Transverse colon (tissue), 4 donors: ENCODE measurements at regions of chr6 and their contacts with region 1.

Region 1: GRCh38 chr6:119978274-119978889 is 628.8 kb upstream of the MAN1A1 start:
- DNase-seq: no peak
- H3K4me3 ChIP-seq: no peak overlapping the region
- H3K27ac ChIP-seq: no peak overlapping the region
- H3K4me1 ChIP-seq: peaks cover 0 to 23% (median 3%) of the 10 kb centered on the region in 4 donors
- H3K27me3 ChIP-seq: no peaks in the 10 kb centered on the region
- CTCF ChIP-seq: peak in 4 of 5 experiments; percentile 22 to 37 (median 27)
- EP300 ChIP-seq: no peak
- POLR2A ChIP-seq: no peak

Region 2: DNA sequence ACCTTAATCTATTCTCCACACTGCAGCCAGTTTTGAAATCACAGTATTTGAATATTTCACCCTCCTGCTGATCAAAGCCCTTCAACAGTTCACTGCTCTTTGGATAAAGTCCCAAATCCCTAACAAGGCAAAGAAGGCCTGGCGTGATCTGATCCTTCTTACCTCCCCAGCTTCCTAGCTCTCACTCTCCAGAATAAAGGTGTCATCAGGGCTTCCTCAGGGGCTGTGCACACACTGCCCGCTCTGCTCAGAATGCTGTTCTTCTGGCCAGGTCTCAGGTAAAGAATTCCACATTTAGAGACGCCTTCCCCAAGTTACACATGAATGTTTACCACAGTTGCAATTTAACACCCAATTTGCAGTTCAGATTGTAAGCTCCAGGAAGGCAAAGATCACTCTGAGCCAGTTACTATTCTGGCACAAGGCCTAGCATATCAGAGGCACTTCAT is 984.6 kb before region 1 on chr6:
- in situ Hi-C with region 1: no loop called
- intact Hi-C with region 1: loop called (anchors 10 kb)
- DNase-seq: no peak
- H3K4me3 ChIP-seq: no peak overlapping the region
- H3K27ac ChIP-seq: no peak overlapping the region
- H3K4me1 ChIP-seq: no peaks in the 10 kb centered on the region
- H3K27me3 ChIP-seq: no peaks in the 10 kb centered on the region
- CTCF ChIP-seq: no peak
- EP300 ChIP-seq: no peak
- POLR2A ChIP-seq: no peak

Region 3: DNA sequence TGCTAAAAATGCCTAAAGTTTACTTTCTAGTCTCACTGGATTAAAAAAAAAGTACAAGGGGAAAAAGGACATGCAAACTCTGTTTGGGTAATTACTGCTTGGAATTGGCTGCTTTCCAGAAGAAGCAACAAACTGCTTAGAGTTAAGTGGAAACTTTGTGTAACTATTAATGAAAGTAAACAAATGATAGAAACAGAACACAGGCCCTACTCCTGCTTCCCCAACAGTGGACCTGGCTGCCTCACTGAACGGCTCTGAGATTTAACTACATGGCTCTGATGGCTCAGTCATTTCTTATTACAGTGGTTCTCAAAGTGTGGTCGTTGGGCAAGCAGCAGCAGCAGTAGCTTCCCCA is 737.3 kb before region 1 on chr6:
- in situ Hi-C with region 1: no loop called
- intact Hi-C with region 1: no loop called
- DNase-seq: no peak
- H3K4me3 ChIP-seq: no peak overlapping the region
- H3K27ac ChIP-seq: peak overlapping the region in 1 of 4 donors; percentile 24
- H3K4me1 ChIP-seq: peaks cover 0 to 10% (median 6%) of the 10 kb centered on the region in 4 donors
- H3K27me3 ChIP-seq: no peaks in the 10 kb centered on the region
- CTCF ChIP-seq: no peak
- EP300 ChIP-seq: no peak
- POLR2A ChIP-seq: no peak